Activated CD4-positive, alpha-beta T cell treated with anti-CD3 and anti-CD28 coated beads, Interleukin-2, amount 10 ng/mL, durations not matched to agents 24 days and 14 days (primary cell): ENCODE measurements at regions of chr1 and their contacts with region 1.

Region 1: GRCh38 chr1:167627865-167628641 is 2.0 kb upstream of the RCSD1 start:
- DNase-seq: peak; percentile 95
- H3K4me3 Mint-ChIP-seq: peak overlapping the region; percentile 94
- H3K27ac Mint-ChIP-seq: peak overlapping the region; percentile 92
- H3K4me1 Mint-ChIP-seq: peaks cover 57% of the 10 kb centered on the region
- H3K27me3 Mint-ChIP-seq: no peaks in the 10 kb centered on the region

Region 2: DNA sequence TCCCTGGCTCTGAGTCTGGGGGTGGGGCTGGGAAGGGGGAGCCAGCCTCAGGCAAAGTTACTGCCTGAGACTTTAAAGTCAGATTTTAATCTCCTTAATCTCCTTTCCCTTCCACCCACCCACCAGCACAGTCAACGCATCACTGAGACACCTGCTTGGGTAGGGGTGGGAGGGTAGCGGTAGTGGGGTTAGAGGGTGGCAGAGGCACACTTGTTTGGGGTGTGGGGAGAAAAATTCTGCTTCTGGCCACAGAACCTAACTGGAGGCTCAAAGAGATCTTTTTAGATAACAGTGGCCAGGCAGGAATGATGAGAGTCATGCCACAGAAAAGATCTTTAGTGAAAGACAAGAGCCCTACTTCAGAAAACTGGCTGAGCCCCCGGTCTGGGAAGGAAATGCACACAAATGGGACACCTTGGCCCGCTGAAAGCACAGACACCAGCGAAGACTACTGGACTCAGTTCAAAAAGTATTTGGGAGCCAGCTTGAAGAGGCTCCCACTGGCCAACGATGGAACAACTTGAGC is 153.8 kb before region 1 on chr1:
- intact Hi-C with region 1: loop called (anchors 10 kb)
- DNase-seq: no peak
- H3K4me3 Mint-ChIP-seq: peak overlapping the region; percentile 61
- H3K27ac Mint-ChIP-seq: peak overlapping the region; percentile 70
- H3K4me1 Mint-ChIP-seq: peaks cover 67% of the 10 kb centered on the region
- H3K27me3 Mint-ChIP-seq: no peaks in the 10 kb centered on the region

Region 3: DNA sequence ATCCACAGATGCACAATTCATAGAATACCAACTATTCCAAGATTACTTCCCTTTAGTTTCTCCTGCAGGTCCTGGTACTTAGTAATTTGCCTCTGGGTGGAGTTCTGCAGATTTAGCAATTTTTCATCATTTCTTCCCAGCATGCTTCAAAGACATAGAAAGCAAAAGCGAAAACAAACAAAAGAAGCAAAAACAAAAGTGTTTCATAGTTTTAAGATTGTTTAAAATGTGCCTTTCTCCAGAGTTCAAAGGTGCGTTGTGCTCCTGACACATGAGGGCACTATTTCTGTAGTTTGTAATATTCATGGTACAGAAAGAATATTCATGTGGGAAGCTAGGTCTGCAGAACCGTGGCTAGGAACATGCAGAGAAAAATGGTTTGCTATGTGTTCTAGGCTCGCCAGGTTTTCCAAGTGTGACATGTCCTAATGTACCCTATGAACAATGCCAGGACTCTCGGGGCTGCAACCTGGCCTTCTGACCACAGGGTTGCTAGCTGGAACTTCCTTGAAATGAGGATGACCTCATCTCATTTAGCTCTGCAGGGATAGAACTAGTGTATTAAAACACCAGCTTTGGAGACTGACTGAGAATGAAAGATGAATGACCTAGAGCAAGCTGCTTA is 28.0 kb before region 1 on chr1:
- intact Hi-C with region 1: loop called (anchors 1 kb)
- DNase-seq: peak; percentile 85
- H3K4me3 Mint-ChIP-seq: peak overlapping the region; percentile 72
- H3K27ac Mint-ChIP-seq: peak overlapping the region; percentile 85
- H3K4me1 Mint-ChIP-seq: peaks cover 40% of the 10 kb centered on the region
- H3K27me3 Mint-ChIP-seq: peaks cover 4% of the 10 kb centered on the region

Region 4: DNA sequence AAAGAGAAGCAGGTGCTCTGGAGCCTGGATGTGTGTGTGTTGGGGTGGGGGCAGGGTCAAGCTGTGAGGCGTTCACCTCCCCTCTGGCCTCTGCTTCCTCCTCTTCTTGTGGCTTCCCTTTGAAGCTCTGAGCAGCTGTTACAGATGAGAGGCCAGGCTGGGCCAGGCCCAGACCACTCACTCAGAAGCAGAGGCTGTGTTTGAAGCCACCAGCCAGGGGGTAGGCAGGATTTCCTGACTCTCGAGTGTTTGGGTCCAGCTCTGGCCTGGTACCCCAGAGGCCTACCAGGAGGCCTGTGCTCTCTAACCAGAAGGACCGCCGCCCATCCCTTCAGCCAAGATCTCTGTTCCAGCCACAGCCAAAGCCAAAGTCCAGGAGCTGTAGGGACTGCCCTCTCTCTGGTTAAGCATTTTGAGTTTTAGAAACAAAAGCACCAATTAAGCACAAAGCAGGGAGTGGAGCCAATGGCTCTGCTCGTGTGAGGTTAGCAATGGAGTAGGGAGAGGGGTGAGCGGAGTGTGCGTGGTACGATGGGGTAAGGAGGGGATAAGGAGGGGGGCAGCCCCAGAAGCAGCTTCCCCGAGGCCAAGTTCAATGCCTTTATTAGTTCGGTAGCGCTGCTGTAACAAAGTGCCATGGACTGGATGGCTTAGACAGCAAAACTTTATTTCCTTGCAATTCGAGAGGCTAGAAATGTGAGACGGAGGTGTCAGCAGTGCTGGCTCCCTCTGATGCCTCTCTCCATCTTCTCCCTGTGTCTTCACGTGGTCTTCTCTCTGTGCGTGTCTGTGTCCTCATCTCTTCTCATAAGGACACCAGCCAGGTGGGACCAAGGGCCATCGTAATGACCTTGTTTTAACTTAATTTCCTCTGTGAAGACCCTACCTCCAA is 22.5 kb after region 1 on chr1:
- intact Hi-C with region 1: loop called (anchors 2 kb)
- DNase-seq: peak; percentile 63
- H3K4me3 Mint-ChIP-seq: peak overlapping the region; percentile 31
- H3K27ac Mint-ChIP-seq: peak overlapping the region; percentile 79
- H3K4me1 Mint-ChIP-seq: peaks cover 64% of the 10 kb centered on the region
- H3K27me3 Mint-ChIP-seq: no peaks in the 10 kb centered on the region

Region 5: DNA sequence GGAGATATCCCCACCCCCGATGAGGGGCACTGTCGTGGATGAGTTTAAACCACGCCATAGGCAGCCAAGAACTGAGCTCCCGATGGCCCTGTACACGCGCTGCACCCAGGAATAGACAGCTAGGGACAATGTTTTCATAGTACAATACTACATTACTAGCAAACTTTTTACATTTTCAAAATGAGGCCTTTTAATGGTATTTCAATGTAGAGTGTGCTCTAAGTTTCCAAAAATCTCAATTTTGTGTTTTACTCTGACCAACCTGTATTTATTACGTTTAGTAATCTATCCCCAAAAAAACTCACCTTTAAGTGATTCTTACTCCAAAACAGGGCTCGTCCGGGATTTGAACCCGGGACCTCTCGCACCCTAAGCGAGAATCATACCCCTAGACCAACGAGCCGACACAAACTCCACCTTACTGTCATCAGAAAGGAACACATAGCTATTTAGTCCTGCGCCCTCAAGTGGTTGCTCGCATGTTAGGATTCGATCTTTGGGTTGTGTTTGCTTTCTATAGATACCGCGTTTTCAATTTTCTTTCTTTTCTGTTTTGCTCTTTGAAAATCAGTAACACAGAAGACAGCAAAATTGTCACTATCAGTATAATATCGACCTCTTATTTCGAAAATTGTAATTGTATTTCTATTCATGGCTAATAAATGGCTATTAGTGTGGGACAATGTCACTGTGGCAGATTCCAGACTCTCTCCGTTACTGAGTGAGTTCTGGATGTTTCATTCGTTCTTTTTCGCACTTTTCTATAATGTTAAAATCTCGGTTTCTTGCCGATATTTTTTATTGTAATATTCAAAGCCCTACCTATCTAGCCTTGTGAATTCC is 87.3 kb after region 1 on chr1:
- intact Hi-C with region 1: loop called (anchors 2 kb)
- DNase-seq: peak; percentile 97
- H3K4me3 Mint-ChIP-seq: peak overlapping the region; percentile 96
- H3K27ac Mint-ChIP-seq: peak overlapping the region; percentile 98
- H3K4me1 Mint-ChIP-seq: peaks cover 56% of the 10 kb centered on the region
- H3K27me3 Mint-ChIP-seq: peaks cover 13% of the 10 kb centered on the region